Heart left ventricle (tissue), 16 donors: ENCODE measurements at regions of chr12 and their contacts with region 1.

Region 1: GRCh38 chr12:84502907-84503787 is 409.5 kb downstream of the SLC6A15 start:
- DNase-seq: peak in 2 of 5 donors; percentile 21 to 29
- ATAC-seq: peak in 2 of 4 donors; percentile 63 to 72
- H3K4me3 ChIP-seq: no peak overlapping the region
- H3K27ac ChIP-seq: no peak overlapping the region
- H3K4me1 ChIP-seq: peaks cover 0 to 15% (median 0%) of the 10 kb centered on the region in 12 donors
- H3K27me3 ChIP-seq: no peaks in the 10 kb centered on the region
- CTCF ChIP-seq: peak; percentile 28 to 60 (median 44)
- POLR2A ChIP-seq: no peak

Region 2: GRCh38 chr12:84174115-84174514 is 329.0 kb before region 1 on chr12:
- intact Hi-C with region 1: no loop called
- DNase-seq: no peak
- ATAC-seq: no peak
- H3K4me3 ChIP-seq: no peak overlapping the region
- H3K27ac ChIP-seq: no peak overlapping the region
- H3K4me1 ChIP-seq: no peaks in the 10 kb centered on the region
- H3K27me3 ChIP-seq: no peaks in the 10 kb centered on the region
- CTCF ChIP-seq: no peak
- POLR2A ChIP-seq: no peak

Region 3: GRCh38 chr12:84484796-84485195 is 18.4 kb before region 1 on chr12:
- intact Hi-C with region 1: no loop called
- DNase-seq: no peak
- ATAC-seq: no peak
- H3K4me3 ChIP-seq: no peak overlapping the region
- H3K27ac ChIP-seq: no peak overlapping the region
- H3K4me1 ChIP-seq: no peaks in the 10 kb centered on the region
- H3K27me3 ChIP-seq: no peaks in the 10 kb centered on the region
- CTCF ChIP-seq: no peak
- POLR2A ChIP-seq: no peak

Region 4: DNA sequence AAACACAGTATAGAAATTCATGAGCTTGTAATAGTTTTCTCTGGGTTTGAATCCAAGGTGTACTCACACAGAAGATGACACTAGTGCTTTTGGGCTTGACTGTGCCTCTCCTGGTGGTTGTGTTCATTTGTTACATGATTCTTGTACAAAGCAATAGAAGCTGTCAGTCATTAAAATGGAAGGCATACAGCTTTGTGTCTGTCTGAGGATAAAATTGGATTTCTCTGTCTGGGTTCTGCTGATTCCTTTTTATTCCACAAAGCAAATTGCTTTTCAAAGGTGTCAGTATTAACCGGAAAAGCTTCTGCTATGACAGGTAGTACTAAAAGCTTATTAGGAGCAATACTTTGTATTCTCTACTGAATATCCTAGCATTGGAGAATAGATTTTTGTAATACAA is 48.2 kb after region 1 on chr12:
- intact Hi-C with region 1: loop called in 1 of 10 experiments (anchors 10 kb)
- DNase-seq: no peak
- ATAC-seq: no peak
- H3K4me3 ChIP-seq: no peak overlapping the region
- H3K27ac ChIP-seq: no peak overlapping the region
- H3K4me1 ChIP-seq: no peaks in the 10 kb centered on the region
- H3K27me3 ChIP-seq: no peaks in the 10 kb centered on the region
- CTCF ChIP-seq: no peak
- POLR2A ChIP-seq: no peak

Region 5: GRCh38 chr12:84637926-84638325 is 134.8 kb after region 1 on chr12:
- intact Hi-C with region 1: no loop called
- DNase-seq: no peak
- ATAC-seq: no peak
- H3K4me3 ChIP-seq: no peak overlapping the region
- H3K27ac ChIP-seq: no peak overlapping the region
- H3K4me1 ChIP-seq: no peaks in the 10 kb centered on the region
- H3K27me3 ChIP-seq: no peaks in the 10 kb centered on the region
- CTCF ChIP-seq: no peak
- POLR2A ChIP-seq: no peak